Head of caudate nucleus (tissue), 42 donors: ENCODE measurements at regions of chr7 and their contacts with region 1.

Region 1: DNA sequence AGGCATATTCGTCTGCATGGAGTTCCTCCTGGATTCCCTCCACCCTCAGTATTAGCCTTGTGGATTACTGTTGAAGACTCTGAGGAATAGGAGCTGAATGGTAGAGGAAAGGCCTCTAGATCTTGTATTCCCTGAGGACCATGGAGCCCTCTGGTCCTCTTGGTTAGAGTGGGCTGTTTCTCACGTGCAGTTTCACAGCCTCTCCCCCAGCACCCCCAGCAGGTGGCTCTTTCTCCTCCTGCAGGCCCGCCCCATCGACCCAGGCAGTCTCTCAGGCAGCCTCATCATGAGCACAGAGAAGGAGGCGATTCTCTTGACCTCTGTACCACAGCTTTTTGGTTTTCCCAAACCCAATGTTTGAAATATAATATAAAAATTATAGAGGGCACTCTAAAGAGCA is 102.0 kb downstream of the WNT2 start:
- DNase-seq: no peak

Region 2: DNA sequence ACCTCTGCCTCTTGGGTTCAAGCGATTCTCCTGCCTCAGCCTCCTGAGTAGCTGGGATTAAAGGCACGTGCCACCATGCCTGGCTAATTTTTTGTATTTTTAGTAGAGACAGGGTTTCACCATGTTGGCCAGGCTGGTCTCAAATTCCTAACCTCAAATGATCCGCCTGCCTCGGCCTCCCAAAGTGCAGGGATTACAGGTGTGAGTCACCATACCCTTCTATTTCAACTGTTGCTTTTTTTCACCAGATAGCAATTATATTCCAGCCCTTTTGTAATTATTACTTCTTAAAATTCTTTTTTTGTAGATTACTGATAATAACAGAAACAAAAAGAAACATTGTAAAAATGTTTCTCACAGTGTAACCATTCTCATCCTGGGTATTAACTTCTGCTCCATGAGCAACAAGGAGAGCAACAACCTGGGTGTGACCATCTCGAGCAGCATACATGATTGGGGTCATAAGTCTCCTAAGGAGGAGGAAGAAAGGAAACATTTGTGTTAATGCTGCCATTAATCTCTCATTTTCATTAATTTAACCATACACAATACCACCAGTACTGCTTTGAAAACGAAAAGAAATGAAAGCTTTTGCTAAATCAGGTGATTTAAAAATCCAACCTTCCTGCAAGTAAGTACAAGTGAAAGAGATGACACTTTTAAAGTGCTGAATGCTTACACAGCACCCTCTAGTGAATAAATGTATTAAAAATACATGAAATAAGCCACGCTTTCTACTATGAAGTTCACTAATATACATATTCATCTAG is 164.7 kb after region 1 on chr7:
- intact Hi-C with region 1: loop called (anchors 5 kb)
- DNase-seq: no peak